PC-9 (cell line): ENCODE measurements at regions of chr10 and their contacts with region 1.

Region 1: DNA sequence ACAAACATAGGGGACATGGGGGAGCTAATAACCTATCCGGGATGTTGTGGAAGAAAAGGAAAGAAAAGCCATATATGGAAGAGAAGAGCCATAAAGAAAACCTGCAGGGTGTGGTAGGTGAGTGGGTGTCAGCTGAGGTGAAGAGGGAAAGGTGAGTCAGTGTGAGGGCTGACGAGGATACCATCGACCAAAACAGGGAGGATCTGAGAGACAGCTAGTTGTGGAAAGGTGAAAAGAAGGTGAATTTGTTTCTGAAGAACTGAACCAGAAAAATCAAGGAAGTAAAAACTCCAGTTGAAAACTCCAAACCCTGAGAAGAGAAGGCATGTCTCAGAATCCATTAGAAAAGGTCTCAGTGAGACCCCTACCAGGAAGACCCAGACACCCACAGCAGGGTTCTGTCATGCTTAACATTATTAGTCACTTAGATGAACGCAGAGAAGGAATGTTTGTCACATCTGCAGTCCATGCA is 4.1 kb downstream of the BLNK start:
- DNase-seq: no peak
- H3K4me3 ChIP-seq: no peak overlapping the region
- H3K27ac ChIP-seq: no peak overlapping the region
- H3K4me1 ChIP-seq: no peaks in the 10 kb centered on the region
- H3K27me3 ChIP-seq: no peaks in the 10 kb centered on the region
- CTCF ChIP-seq: no peak

Region 2: DNA sequence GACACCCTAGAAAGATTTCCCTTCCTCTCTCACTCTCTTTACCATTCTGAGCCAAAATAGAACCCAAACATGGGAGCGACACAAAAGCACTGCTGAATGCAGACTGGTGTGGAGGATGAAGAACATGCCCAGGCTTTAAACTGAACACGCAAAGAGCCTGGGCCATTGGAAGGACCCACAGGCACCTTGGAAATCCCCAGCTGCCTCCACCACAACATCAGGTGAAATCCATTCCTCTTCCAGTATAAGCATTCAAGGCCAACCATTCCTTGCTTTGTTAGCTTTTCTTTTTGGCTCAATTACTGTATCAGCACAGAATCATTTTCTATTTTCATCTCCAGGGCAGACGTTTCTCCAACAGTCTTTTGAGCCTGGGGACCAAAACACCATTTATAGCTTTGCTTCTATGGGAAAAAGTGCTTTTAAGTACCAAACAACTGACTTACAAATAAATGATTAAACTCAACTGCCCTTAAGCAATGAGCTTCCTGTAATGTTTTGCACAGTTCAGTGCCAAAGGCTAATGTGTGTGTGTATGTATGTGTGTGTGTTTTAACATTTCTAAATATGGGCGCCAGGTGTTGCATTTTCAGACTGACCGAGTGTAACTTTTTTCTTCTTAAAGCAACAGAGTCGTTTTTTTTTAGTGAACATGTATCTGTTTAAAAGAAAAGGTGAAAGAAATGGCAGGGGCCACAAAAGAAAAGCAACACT is 20.3 kb after region 1 on chr10:
- CTCF ChIA-PET with region 1: no interaction called
- POLR2A ChIA-PET with region 1: no interaction called
- intact Hi-C with region 1: loop called (anchors 2 kb)
- DNase-seq: no peak
- H3K4me3 ChIP-seq: no peak overlapping the region
- H3K27ac ChIP-seq: no peak overlapping the region
- H3K4me1 ChIP-seq: no peaks in the 10 kb centered on the region
- H3K27me3 ChIP-seq: no peaks in the 10 kb centered on the region
- CTCF ChIP-seq: no peak